A673 (cell line): ENCODE measurements at regions of chrX and their contacts with region 1.

Region 1: DNA sequence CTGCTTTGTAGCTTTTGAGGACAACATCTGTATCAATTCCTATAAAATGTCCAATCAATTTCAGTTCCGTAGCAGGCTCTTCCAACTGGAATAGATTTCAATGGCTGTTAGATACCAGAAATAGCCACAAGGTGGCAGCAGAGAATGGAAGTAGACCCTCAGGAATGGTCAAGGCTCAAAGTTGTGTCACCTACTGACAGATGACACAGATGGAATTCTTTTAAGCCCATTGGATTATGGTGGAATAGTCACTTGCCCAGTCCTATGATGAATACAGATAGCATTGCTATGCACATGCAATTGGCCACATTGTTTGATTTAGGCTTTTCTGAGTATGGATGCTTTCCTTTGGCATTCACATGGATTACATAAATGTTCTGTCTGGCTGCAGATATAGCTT is 130.4 kb upstream of the RADX start:
- DNase-seq: peak; percentile 57
- H3K4me3 ChIP-seq: no peak overlapping the region
- H3K27ac ChIP-seq: no peak overlapping the region
- H3K4me1 ChIP-seq: no peaks in the 10 kb centered on the region
- H3K27me3 ChIP-seq: no peaks in the 10 kb centered on the region
- CTCF ChIP-seq: peak; percentile 77

Region 2: DNA sequence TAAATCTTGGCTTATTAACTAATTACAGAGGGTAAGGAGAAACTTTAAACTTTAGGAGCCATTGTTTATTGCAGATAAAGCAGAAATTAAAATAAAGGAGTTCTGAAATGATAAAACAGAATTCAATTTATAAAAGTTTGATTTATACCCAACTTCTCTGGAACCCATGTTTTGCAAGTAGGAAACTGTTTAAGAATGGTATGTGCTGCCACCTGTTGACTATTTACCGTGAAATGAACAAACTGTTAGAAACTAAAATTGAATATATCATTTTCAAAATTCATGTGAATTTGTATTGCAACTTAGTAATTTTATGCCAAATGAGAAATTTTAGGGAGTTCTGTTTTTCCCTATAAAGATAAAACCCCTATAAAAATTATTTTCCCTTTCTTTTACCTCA is 310.2 kb after region 1 on chrX:
- CTCF ChIA-PET with region 1: no interaction called
- POLR2A ChIA-PET with region 1: no interaction called
- intact Hi-C with region 1: loop called (anchors 1 kb)
- DNase-seq: peak; percentile 2
- H3K4me3 ChIP-seq: no peak overlapping the region
- H3K27ac ChIP-seq: no peak overlapping the region
- H3K4me1 ChIP-seq: no peaks in the 10 kb centered on the region
- H3K27me3 ChIP-seq: peaks cover 9% of the 10 kb centered on the region
- CTCF ChIP-seq: peak; percentile 52